Uterus (tissue), 4 donors: ENCODE measurements at regions of chr11 and their contacts with region 1.

Region 1: GRCh38 chr11:44949160-44950030 is 1.3 kb downstream of the TP53I11 start:
- DNase-seq: peak in 1 of 2 donors; percentile 42
- H3K4me3 ChIP-seq: peak overlapping the region; percentile 73 to 79
- H3K27ac ChIP-seq: peak overlapping the region; percentile 60 to 75
- H3K4me1 ChIP-seq: peaks cover 0 to 2% of the 10 kb centered on the region in 2 donors
- H3K27me3 ChIP-seq: no peaks in the 10 kb centered on the region
- CTCF ChIP-seq: peak; percentile 25 to 53 (median 36)
- POLR2A ChIP-seq: no peak

Region 2: DNA sequence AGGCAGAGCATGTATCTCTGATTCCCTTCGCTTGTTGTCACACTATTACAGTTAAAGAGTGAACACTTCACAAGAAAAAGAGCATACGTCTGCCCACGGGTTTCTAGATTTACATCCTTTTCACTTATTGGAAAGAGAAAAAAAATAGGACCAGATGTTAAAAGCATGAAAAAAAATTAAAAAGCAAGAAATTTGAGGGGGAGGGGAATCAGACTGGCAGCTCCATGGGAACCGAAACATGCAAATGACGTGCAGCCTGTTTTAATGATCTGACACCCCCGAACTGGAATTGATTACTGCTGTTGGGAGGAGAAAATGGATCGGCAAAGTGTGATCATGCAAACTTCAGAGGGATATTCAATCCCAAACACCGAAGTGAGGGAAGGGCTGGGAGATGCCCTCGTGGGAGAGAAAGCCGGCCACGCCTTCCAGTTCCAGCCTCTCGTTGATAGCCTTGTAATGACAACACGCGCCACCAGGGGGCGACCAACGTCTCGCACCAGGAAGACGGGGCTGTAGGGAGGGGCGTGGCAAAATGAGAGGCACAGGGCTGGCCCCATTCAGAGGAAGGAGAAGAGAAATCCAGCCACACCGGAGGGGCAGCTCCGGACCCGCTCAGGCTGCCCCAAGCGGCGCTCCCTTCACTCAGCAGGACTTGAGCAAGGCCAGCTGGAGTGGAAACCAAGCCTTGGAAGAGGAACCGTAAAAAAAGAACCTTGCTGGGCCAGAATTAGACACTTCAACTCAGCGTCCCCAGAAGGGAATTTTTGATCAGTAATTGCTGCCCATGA is 390.5 kb after region 1 on chr11:
- intact Hi-C with region 1: loop called (anchors 10 kb)
- DNase-seq: peak; percentile 92 to 94
- H3K4me3 ChIP-seq: peak overlapping the region in 1 of 2 donors; percentile 23
- H3K27ac ChIP-seq: peak overlapping the region; percentile 0 to 6
- H3K4me1 ChIP-seq: no peaks in the 10 kb centered on the region
- H3K27me3 ChIP-seq: no peaks in the 10 kb centered on the region
- CTCF ChIP-seq: peak; percentile 90 to 94 (median 92)
- POLR2A ChIP-seq: no peak